Activated CD8-positive, alpha-beta memory T cell treated with anti-CD3 and anti-CD28 coated beads, Interleukin-2, amount 10 ng/mL, durations not matched to agents 7 days and 5 days (primary cell): ENCODE measurements at regions of chr12 and their contacts with region 1.

Region 1: GRCh38 chr12:47779301-47779942 is 6.4 kb downstream of the SLC48A1 start:
- DNase-seq: peak; percentile 94
- ATAC-seq: peak; percentile 87
- H3K4me3 Mint-ChIP-seq: no peak overlapping the region
- H3K27ac Mint-ChIP-seq: peak overlapping the region; percentile 21
- H3K4me1 Mint-ChIP-seq: peaks cover 38% of the 10 kb centered on the region
- H3K27me3 Mint-ChIP-seq: no peaks in the 10 kb centered on the region

Region 2: DNA sequence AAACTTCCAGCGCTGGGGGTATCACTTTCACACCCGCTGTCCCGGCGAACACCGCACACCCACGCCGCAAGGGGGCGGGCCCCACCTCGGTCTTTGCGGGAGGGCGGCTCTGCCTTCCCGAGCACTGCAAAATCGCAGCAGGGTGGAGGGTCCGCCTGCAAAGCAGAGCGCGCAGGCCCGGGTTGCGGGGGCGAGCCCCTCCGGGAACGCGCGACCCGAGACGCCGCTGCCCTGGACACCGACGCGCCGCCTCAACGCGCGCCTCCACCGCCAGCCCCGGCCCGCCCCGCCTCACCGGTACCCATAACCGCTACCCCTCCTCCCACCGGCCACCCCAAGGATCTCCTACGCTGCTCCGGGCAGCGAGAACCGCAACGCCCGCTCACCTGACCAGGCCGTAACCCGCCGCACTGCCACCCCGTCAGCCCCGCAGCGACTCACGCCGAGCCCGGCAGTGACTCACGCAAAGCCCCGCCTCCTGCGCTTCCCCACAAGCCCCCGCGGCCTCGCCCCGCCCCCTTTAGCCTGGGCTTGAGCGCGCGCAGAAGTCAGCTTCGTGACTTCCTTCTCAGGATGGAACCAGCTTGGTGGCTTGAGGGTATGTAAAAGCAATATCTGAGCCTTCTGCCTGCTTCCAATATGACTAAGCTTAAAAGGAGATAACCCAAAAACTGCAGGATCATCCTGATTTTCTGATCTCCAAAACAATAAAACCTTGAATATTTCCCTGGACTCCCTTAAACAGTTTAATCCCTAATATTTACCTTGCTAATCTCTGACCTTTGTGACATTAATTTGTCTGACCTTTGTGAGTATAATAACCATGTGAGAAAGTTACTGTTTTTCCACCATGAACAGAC is 73.6 kb before region 1 on chr12 and contains the start of gene RPAP3:
- CTCF ChIA-PET with region 1: interaction called, 443 read pairs
- DNase-seq: peak; percentile 99
- ATAC-seq: peak; percentile 97
- H3K4me3 Mint-ChIP-seq: peak within 1 kb of the TSS; percentile 87
- H3K27ac Mint-ChIP-seq: peak within 1 kb of the TSS; percentile 99
- H3K4me1 Mint-ChIP-seq: peaks cover 55% of the 10 kb centered on the region
- H3K27me3 Mint-ChIP-seq: no peaks in the 10 kb centered on the region
- total RNA-seq, gene RPAP3: 41.3 to 51.4 TPM

Region 3: GRCh38 chr12:47758834-47759690 is 20.4 kb before region 1 on chr12 and contains the start of gene RAPGEF3:
- CTCF ChIA-PET with region 1: interaction called, 954 read pairs
- DNase-seq: peak; percentile 80
- ATAC-seq: peak; percentile 87
- H3K4me3 Mint-ChIP-seq: peak within 1 kb of the TSS; percentile 70
- H3K27ac Mint-ChIP-seq: peak within 1 kb of the TSS; percentile 45
- H3K4me1 Mint-ChIP-seq: peaks cover 47% of the 10 kb centered on the region
- H3K27me3 Mint-ChIP-seq: peaks cover 2% of the 10 kb centered on the region
- total RNA-seq, gene RAPGEF3: 1.5 to 1.9 TPM

Region 4: GRCh38 chr12:47767216-47767724 is 12.2 kb before region 1 on chr12:
- CTCF ChIA-PET with region 1: interaction called, 954 read pairs
- DNase-seq: peak; percentile 89
- ATAC-seq: peak; percentile 85
- H3K4me3 Mint-ChIP-seq: no peak overlapping the region
- H3K27ac Mint-ChIP-seq: peak overlapping the region; percentile 58
- H3K4me1 Mint-ChIP-seq: peaks cover 27% of the 10 kb centered on the region
- H3K27me3 Mint-ChIP-seq: peaks cover 16% of the 10 kb centered on the region

Region 5: DNA sequence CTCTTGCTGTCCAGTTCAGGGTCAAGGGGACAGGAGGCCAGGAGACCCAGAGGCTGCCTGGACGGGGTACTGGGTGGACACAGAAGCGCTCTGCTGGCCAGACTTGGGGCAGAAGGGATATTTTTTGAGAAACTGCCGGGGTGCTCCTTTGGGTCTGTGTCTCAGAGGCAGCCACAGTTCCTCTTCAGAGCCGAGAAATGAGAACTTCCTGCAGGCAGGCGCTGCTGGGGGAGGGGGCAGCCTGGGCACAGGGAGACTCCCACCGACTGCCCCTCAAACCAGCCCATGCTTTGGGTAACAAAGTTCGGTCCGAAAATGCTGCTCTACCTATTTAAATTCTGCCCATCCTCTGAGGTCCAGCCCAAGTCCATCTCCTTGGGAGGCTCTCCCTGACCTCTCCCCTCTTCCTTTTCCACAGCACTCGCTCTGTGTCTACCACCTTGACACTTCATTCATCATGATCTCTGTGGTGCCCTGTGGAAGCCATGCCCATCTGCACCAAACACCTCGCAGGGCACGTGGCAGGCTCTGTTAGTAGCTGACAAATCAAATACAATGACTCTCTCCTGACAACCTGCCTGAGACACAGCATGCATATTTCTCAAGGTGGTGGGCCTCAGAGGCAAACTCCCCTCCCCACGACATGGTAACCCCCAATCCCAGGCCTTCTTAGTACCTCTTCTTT is 23.9 kb after region 1 on chr12:
- CTCF ChIA-PET with region 1: interaction called, 26 read pairs
- DNase-seq: no peak
- ATAC-seq: no peak
- H3K4me3 Mint-ChIP-seq: peak overlapping the region; percentile 27
- H3K27ac Mint-ChIP-seq: peak overlapping the region; percentile 82
- H3K4me1 Mint-ChIP-seq: peaks cover 86% of the 10 kb centered on the region
- H3K27me3 Mint-ChIP-seq: no peaks in the 10 kb centered on the region

Region 6: DNA sequence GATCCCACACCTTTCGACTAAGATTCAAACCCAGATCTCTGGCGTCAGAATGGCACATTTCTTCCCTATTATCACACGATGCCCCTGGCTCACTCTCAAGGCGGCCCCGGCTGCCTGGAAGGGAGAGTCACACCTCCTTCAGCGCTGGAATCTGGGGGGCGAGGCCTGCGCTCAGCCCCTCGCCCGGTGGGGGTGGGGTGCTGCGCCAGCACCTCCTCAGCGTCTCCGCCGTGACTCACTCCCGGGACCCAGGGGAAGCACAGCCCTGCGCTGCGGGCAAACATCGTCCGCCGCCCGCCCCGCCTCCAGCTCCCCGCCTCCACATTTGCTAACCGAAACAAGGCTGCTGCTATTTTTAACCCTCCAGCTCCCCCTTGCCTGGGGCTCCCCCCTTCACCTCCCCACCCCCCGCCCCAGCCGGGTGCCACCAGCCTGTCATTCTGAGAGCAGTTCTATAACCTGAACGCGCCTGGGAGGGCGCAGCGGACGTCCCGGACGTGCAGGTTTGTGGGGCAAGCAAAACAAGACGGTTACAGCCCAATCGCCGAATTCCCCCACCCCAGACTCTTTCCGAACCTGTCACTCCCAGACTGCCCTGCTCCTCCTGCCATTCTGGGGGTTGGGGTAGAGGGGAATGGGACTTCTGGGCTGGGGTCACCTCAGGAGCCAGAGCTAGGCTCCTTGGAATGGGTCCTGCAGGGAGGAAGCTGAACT is 33.5 kb after region 1 on chr12:
- CTCF ChIA-PET with region 1: interaction called, 26 read pairs
- DNase-seq: peak; percentile 98
- ATAC-seq: peak; percentile 73
- H3K4me3 Mint-ChIP-seq: peak overlapping the region; percentile 91
- H3K27ac Mint-ChIP-seq: peak overlapping the region; percentile 96
- H3K4me1 Mint-ChIP-seq: peaks cover 87% of the 10 kb centered on the region
- H3K27me3 Mint-ChIP-seq: no peaks in the 10 kb centered on the region